Mammary epithelial cell (primary cell): ENCODE measurements at regions of chrX and their contacts with region 1.

Region 1: DNA sequence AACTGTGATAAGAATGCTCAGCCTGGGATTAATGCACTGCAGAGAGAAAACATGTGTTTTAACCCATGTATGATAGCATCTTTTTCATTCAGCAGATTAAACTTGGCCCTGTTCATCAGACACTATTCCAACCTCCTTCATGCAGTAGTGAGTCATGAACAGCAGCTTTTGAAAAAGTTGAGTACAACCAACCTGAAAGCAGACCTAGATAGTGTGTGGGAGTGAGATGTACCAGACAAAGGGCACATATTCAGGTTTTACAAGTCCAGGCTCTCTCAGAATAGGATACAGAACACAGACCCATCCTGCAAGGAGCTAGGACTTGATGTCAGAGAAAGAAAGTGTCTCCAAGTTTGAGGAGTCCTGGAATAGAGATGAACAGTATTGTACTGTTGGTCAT is 237.3 kb upstream of the STS start:
- DNase-seq: no peak
- H3K4me3 ChIP-seq: no peak overlapping the region
- H3K27ac ChIP-seq: no peak overlapping the region
- H3K4me1 ChIP-seq: no peaks in the 10 kb centered on the region
- H3K27me3 ChIP-seq: no peaks in the 10 kb centered on the region
- CTCF ChIP-seq: no peak

Region 2: GRCh38 chrX:6526564-6527136 is 383.6 kb before region 1 on chrX:
- CTCF ChIA-PET with region 1: no interaction called
- dilution Hi-C with region 1: no loop called
- in situ Hi-C with region 1: no loop called
- intact Hi-C with region 1: no loop called
- DNase-seq: no peak
- H3K4me3 ChIP-seq: no peak overlapping the region
- H3K27ac ChIP-seq: no peak overlapping the region
- H3K4me1 ChIP-seq: no peaks in the 10 kb centered on the region
- H3K27me3 ChIP-seq: no peaks in the 10 kb centered on the region
- CTCF ChIP-seq: no peak

Region 3: GRCh38 chrX:6770936-6771335 is 139.3 kb before region 1 on chrX:
- CTCF ChIA-PET with region 1: no interaction called
- dilution Hi-C with region 1: loop called (anchors 5 kb)
- in situ Hi-C with region 1: no loop called
- intact Hi-C with region 1: no loop called
- DNase-seq: no peak
- H3K4me3 ChIP-seq: no peak overlapping the region
- H3K27ac ChIP-seq: no peak overlapping the region
- H3K4me1 ChIP-seq: no peaks in the 10 kb centered on the region
- H3K27me3 ChIP-seq: no peaks in the 10 kb centered on the region
- CTCF ChIP-seq: no peak

Region 4: DNA sequence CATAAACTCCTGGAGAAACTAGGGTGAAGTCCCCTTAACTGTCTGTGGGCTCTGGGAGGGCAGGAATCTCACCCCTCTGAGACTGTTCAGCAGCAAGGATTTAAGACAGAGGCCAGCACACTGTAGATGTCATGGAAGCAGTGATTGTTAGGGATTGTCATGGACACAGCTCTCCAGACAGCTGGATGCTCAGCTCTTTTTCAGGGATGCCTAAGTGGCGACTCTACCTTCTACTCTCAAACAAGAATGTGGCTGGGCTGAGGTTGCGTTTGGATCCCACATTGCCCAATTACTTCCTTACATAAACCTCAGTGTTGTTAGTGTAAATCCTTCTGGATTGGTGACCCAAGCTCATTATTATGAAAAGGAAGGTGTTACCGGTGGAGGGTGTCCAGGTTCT is 83.4 kb before region 1 on chrX:
- CTCF ChIA-PET with region 1: no interaction called
- dilution Hi-C with region 1: no loop called
- in situ Hi-C with region 1: no loop called
- intact Hi-C with region 1: no loop called
- DNase-seq: no peak
- H3K4me3 ChIP-seq: no peak overlapping the region
- H3K27ac ChIP-seq: no peak overlapping the region
- H3K4me1 ChIP-seq: no peaks in the 10 kb centered on the region
- H3K27me3 ChIP-seq: no peaks in the 10 kb centered on the region
- CTCF ChIP-seq: no peak